ENCODE measurements at regions of chr3 and their contacts with region 1.

Region 1: GRCh38 chr3:116445311-116445841 is at the start of gene LSAMP:
- DNase-seq: peak in 1 of 2 donors; percentile 20
- ATAC-seq: peak in 5 of 8 donors; percentile 22 to 62 (median 33)
- H3K4me3 ChIP-seq: peak within 1 kb of the TSS; percentile 10 to 51 (median 41)
- H3K27ac ChIP-seq: no peak within 1 kb of the TSS
- H3K4me1 ChIP-seq: no peaks in the 10 kb centered on the region
- H3K27me3 ChIP-seq: peaks cover 0 to 36% (median 0%) of the 10 kb centered on the region in 7 donors
- CTCF ChIP-seq: no peak
- total RNA-seq, gene LSAMP: 0.75 to 9.0 (median 6.0) TPM

Region 2: DNA sequence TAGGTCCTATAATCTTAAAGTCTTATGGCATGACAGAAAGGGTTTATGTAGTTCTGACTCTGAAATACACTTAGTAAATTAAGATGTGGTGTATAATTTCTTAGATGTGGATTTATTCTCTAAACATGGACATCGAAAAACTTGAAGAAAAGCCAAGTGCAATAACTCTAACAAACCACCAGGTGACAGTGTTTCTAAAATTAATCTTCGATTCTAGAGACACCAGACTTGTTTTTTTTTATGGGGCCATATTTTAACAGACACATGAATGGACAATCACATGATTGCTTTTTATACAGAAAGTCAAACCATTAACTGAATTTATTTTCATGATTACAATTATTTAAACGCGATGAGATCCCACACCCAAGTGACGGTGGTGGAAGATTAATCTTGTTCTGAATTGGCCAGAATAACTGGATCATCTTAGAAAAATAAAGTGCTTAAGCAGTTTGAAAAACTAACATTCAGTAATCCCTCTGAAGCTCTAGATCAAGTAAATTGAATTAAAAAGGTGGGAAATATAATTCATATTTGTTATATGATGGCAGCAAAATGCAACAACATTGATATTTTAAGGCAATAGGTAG is 305.2 kb before region 1 on chr3:
- intact Hi-C with region 1: loop called in 1 of 10 experiments (anchors 10 kb)
- DNase-seq: no peak
- ATAC-seq: no peak
- H3K4me3 ChIP-seq: no peak overlapping the region
- H3K27ac ChIP-seq: no peak overlapping the region
- H3K4me1 ChIP-seq: peaks cover 0 to 7% (median 0%) of the 10 kb centered on the region in 9 donors
- H3K27me3 ChIP-seq: no peaks in the 10 kb centered on the region
- CTCF ChIP-seq: peak; percentile 42 to 72 (median 68)

Region 3: GRCh38 chr3:116474032-116474780 is 28.8 kb after region 1 on chr3:
- intact Hi-C with region 1: no loop called
- DNase-seq: no peak
- ATAC-seq: no peak
- H3K4me3 ChIP-seq: no peak overlapping the region
- H3K27ac ChIP-seq: no peak overlapping the region
- H3K4me1 ChIP-seq: peaks cover 0 to 6% (median 0%) of the 10 kb centered on the region in 9 donors
- H3K27me3 ChIP-seq: no peaks in the 10 kb centered on the region
- CTCF ChIP-seq: no peak

Measured in heart right ventricle (tissue), 16 donors.